ENCODE measurements at regions of chr10 and their contacts with region 1.

Region 1: GRCh38 chr10:70146489-70147258 is at the start of gene TYSND1:
- DNase-seq: peak; percentile 100
- ATAC-seq: peak; percentile 75
- H3K4me3 ChIP-seq: peak within 1 kb of the TSS; percentile 72
- H3K27ac ChIP-seq: peak within 1 kb of the TSS; percentile 57
- H3K4me1 ChIP-seq: peaks cover 21% of the 10 kb centered on the region
- H3K27me3 ChIP-seq: no peaks in the 10 kb centered on the region
- CTCF ChIP-seq: peak; percentile 71
- total RNA-seq, gene TYSND1: 78.2 and 87.3 TPM in 2 replicates

Region 2: DNA sequence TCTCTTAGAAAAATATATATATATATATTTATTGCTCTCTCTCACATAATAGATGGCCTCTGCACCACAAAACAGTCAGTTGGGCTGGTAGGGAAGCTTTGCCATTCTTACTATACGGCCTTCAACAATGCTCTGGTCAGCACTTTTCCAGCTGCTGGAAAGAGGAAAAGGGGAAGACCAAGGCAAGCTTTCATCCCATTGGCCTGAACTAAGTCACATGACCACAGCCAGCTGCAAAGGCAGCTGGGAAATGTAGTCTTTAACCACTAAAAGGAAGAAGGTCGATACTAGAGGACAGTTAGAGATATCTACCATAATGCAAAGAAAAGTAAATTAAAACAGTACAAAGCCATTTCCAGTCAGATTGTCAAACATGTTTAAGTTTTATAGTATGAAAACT is 152.4 kb before region 1 on chr10:
- CTCF ChIA-PET with region 1: no interaction called
- POLR2A ChIA-PET with region 1: no interaction called
- intact Hi-C with region 1: no loop called
- DNase-seq: peak; percentile 86
- ATAC-seq: peak; percentile 88
- H3K4me3 ChIP-seq: no peak overlapping the region
- H3K27ac ChIP-seq: no peak overlapping the region
- H3K4me1 ChIP-seq: no peaks in the 10 kb centered on the region
- H3K27me3 ChIP-seq: peaks cover 58% of the 10 kb centered on the region
- CTCF ChIP-seq: no peak

Region 3: GRCh38 chr10:70084189-70084588 is 62.5 kb before region 1 on chr10:
- CTCF ChIA-PET with region 1: interaction called, 10 read pairs
- POLR2A ChIA-PET with region 1: interaction called, 6 read pairs
- intact Hi-C with region 1: loop called (anchors 1 kb)
- DNase-seq: peak; percentile 50
- ATAC-seq: peak; percentile 60
- H3K4me3 ChIP-seq: no peak overlapping the region
- H3K27ac ChIP-seq: no peak overlapping the region
- H3K4me1 ChIP-seq: no peaks in the 10 kb centered on the region
- H3K27me3 ChIP-seq: no peaks in the 10 kb centered on the region
- CTCF ChIP-seq: peak; percentile 50

Region 4: GRCh38 chr10:70132098-70133029 is 14.3 kb before region 1 on chr10 and contains the start of gene AIFM2:
- CTCF ChIA-PET with region 1: interaction called, 9 read pairs
- POLR2A ChIA-PET with region 1: interaction called, 4 read pairs
- intact Hi-C with region 1: loop called (anchors 1 kb)
- DNase-seq: peak; percentile 97
- ATAC-seq: peak; percentile 80
- H3K4me3 ChIP-seq: peak within 1 kb of the TSS; percentile 70
- H3K27ac ChIP-seq: peak within 1 kb of the TSS; percentile 53
- H3K4me1 ChIP-seq: peaks cover 31% of the 10 kb centered on the region
- H3K27me3 ChIP-seq: no peaks in the 10 kb centered on the region
- CTCF ChIP-seq: no peak; the same call in 1 of the 2 replicates
- total RNA-seq, gene AIFM2: 29.2 and 39.0 TPM in 2 replicates

Region 5: GRCh38 chr10:70191972-70192305 is 45.3 kb after region 1 on chr10:
- CTCF ChIA-PET with region 1: interaction called, 10 read pairs
- POLR2A ChIA-PET with region 1: no interaction called
- intact Hi-C with region 1: loop called (anchors 2 kb)
- DNase-seq: peak; percentile 67
- ATAC-seq: peak; percentile 67
- H3K4me3 ChIP-seq: no peak overlapping the region
- H3K27ac ChIP-seq: no peak overlapping the region
- H3K4me1 ChIP-seq: peaks cover 18% of the 10 kb centered on the region
- H3K27me3 ChIP-seq: no peaks in the 10 kb centered on the region
- CTCF ChIP-seq: no peak

Region 6: GRCh38 chr10:70221030-70221429 is 74.4 kb after region 1 on chr10:
- CTCF ChIA-PET with region 1: interaction called, 18 read pairs
- POLR2A ChIA-PET with region 1: interaction called, 4 read pairs
- intact Hi-C with region 1: no loop called
- DNase-seq: no peak
- ATAC-seq: no peak
- H3K4me3 ChIP-seq: no peak overlapping the region
- H3K27ac ChIP-seq: no peak overlapping the region
- H3K4me1 ChIP-seq: peaks cover 29% of the 10 kb centered on the region
- H3K27me3 ChIP-seq: no peaks in the 10 kb centered on the region
- CTCF ChIP-seq: no peak

Region 7: DNA sequence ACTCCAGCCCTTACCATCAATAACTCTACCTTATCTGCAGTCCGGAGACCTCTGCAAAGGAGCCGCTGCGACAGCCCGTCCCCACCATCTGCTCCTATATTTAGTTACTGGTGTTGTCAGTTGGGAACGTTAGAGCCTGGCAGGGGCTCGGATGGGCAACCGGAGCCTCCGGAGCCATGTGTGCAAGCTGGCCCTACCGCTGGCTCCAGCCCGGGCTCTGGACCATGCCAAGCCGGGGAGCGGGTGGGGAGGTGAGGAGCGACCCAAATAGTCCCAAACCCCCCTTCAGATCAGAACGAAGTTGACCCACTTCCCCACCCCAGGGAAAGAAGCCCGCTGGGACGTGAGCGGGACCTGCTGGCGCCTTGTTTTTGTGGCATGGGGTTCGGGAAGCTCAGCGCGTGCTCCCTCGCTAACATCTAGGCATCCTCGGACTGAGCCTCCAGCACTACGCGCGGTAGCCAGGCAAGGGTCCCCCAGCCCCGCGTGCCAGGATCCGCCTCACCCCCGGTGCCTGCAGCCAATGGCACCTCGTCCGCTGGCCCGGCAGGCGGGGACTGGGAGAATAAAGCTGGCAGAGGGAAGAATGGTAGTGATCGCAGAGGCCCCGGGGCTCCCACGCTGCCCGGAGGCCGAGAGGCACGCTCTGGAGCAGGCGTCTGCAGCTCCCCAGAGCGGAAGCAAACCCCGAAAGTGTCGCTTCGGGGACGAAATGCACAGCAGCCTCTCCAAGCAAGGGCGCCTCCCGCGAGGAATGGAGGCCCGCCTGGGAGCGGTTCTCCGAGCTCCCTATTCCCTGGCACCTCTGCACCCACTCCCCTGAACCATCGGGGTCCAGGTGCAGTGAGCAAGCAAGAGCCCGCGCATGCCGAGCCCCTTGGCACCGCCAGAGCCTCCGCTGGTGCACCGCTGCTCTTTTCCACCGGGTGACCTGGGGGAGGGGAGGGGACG is 235.1 kb after region 1 on chr10:
- CTCF ChIA-PET with region 1: interaction called, 22 read pairs
- POLR2A ChIA-PET with region 1: interaction called, 4 read pairs
- intact Hi-C with region 1: loop called (anchors 1 kb)
- DNase-seq: peak; percentile 57
- ATAC-seq: peak; percentile 21
- H3K4me3 ChIP-seq: peak overlapping the region; percentile 76
- H3K27ac ChIP-seq: no peak overlapping the region
- H3K4me1 ChIP-seq: peaks cover 28% of the 10 kb centered on the region
- H3K27me3 ChIP-seq: no peaks in the 10 kb centered on the region
- CTCF ChIP-seq: no peak

Region 8: GRCh38 chr10:70404036-70404786 is 257.5 kb after region 1 on chr10 and contains the start of gene EIF4EBP2:
- CTCF ChIA-PET with region 1: interaction called, 14 read pairs
- POLR2A ChIA-PET with region 1: no interaction called
- intact Hi-C with region 1: no loop called
- DNase-seq: peak; percentile 99
- ATAC-seq: peak; percentile 31
- H3K4me3 ChIP-seq: peak within 1 kb of the TSS; percentile 75
- H3K27ac ChIP-seq: peak within 1 kb of the TSS; percentile 18
- H3K4me1 ChIP-seq: peaks cover 24% of the 10 kb centered on the region
- H3K27me3 ChIP-seq: no peaks in the 10 kb centered on the region
- CTCF ChIP-seq: no peak
- total RNA-seq, gene EIF4EBP2: 29.2 and 32.6 TPM in 2 replicates

Measured in PC-3 (cell line).